ENCODE measurements at regions of chr15 and their contacts with region 1.

Region 1: GRCh38 chr15:44066316-44066740 is 128.7 kb downstream of the FRMD5 start:
- DNase-seq: no peak
- ATAC-seq: peak; percentile 62

Region 2: GRCh38 chr15:43270676-43271306 is 795.5 kb before region 1 on chr15:
- intact Hi-C with region 1: no loop called
- DNase-seq: peak; percentile 44
- ATAC-seq: no peak

Region 3: GRCh38 chr15:43872416-43873020 is 193.8 kb before region 1 on chr15:
- intact Hi-C with region 1: loop called (anchors 10 kb)
- DNase-seq: no peak
- ATAC-seq: peak; percentile 71

Region 4: DNA sequence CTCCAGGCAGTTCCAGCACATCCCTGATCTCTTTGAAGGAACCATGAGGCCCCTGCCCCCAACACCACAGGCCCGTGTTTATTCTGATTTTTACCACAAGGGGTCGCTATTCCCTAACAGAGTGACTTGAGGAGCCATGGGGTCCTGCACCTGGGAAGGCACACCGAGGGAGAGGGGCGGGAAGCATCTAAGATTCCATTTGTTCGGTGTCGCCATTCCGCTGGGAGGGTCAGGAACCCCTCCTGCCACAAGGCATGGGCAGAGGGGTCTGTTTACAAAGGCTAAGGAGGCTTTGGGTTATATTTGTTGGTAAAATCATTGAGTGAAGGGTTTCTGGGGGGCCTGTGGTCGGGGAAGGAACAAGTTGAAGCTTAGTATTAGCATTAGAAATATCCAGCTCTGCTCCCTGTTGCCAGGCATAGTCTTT is 162.5 kb before region 1 on chr15:
- intact Hi-C with region 1: loop called (anchors 5 kb)
- DNase-seq: no peak
- ATAC-seq: peak; percentile 80

Region 5: GRCh38 chr15:43939070-43939469 is 127.3 kb before region 1 on chr15:
- intact Hi-C with region 1: no loop called
- DNase-seq: no peak
- ATAC-seq: no peak

Region 6: GRCh38 chr15:44010089-44010488 is 56.2 kb before region 1 on chr15:
- intact Hi-C with region 1: no loop called
- DNase-seq: no peak
- ATAC-seq: no peak